Heart right ventricle (tissue), 16 donors: ENCODE measurements at regions of chrX and their contacts with region 1.

Region 1: DNA sequence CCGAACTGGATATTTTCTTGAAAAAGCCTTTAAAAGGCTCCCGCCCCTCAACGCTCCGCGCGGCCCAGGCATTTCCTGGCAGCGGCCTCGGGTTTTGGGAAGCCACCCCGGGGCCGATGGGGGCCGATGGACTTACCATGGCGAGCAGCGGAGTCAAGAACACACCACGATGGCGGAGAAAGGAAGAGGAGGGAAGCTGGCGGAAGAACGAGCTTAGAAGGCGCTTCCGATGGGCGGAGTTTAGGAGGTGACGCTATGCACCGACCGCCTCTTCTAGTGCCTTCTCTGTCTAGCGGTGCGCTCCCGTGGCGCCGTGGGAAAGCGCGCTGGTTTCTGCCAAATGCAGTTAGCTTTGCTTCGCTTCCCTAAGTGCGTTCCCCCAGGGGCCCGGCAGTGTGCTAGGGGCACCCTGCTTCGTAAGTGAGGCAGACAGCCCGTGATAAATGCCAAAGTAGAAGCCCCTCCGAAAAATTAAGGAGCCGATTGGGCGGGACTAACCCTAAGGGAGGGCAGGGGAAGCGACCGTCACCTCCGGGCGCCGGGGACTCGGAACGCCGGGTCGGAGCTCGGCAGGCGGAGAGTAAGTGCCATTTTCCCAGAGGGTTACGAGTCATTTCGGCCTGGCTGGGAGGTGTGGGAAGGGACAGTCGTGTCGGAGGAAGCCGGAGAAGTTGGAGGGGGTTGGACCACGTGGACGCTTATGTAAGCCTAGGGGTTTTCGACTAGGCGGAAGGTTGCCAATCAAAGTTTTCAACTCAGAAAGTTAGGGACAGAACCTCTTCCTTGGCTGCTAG is at the start of gene RPL39:
- DNase-seq: peak; percentile 75 to 87
- ATAC-seq: peak; percentile 96 to 99 (median 98)
- H3K4me3 ChIP-seq: peak within 1 kb of the TSS; percentile 50 to 84 (median 76)
- H3K27ac ChIP-seq: peak within 1 kb of the TSS; percentile 91 to 99 (median 95)
- H3K4me1 ChIP-seq: peaks cover 0 to 42% (median 36%) of the 10 kb centered on the region in 9 donors
- H3K27me3 ChIP-seq: no peaks in the 10 kb centered on the region
- CTCF ChIP-seq: no peak
- total RNA-seq, gene RPL39: 1,035 to 1,338 (median 1,072) TPM

Region 2: GRCh38 chrX:119852382-119853353 is 61.0 kb after region 1 on chrX and contains the start of gene UPF3B:
- intact Hi-C with region 1: loop called in 2 of 10 experiments (anchors 10 kb)
- DNase-seq: peak; percentile 92 to 95
- ATAC-seq: peak; percentile 97 to 99 (median 99)
- H3K4me3 ChIP-seq: peak within 1 kb of the TSS; percentile 47 to 83 (median 70)
- H3K27ac ChIP-seq: peak within 1 kb of the TSS; percentile 44 to 96 (median 89)
- H3K4me1 ChIP-seq: peaks cover 0 to 14% (median 6%) of the 10 kb centered on the region in 9 donors
- H3K27me3 ChIP-seq: peaks cover 0 to 6% (median 0%) of the 10 kb centered on the region in 7 donors
- CTCF ChIP-seq: peak in 1 of 9 donors; percentile 6
- total RNA-seq, gene UPF3B: 2.4 to 3.8 (median 2.9) TPM